CD8-positive, alpha-beta T cell (primary cell): ENCODE measurements at regions of chr6 and their contacts with region 1.

Region 1: DNA sequence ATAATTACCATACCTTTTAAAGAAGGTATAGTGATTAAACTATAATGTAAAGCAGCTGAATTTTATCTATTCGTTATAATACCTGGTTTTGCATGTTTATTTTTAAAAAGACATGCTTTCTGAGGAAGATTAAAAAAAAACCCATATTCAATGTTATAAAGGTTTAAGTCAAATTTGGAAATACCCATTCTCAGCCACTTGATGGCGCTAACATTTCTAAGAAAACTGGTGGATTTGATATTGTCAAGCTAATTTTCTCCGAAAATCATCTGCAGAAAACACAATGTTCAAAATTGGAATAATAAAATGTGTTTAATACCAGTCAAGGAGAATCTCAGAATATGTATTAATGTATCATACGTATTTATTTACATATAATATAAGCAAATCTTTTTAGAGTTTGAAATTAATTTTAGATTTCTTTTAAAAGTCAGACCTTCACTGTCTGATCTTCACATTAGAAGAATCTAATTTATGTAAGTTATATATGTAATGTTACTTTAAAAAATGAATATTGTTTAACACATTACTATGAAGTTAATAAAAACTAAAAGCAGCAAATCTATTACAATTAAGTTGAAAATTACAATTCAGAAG is 35.0 kb downstream of the SHPRH start:
- DNase-seq: peak in 3 of 9 experiments; percentile 5 to 56 (median 37)
- ATAC-seq: no peak
- H3K4me3 ChIP-seq: no peak overlapping the region
- H3K4me3 Mint-ChIP-seq: no peak overlapping the region
- H3K27ac ChIP-seq: no peak overlapping the region
- H3K27ac Mint-ChIP-seq: no peak overlapping the region
- H3K4me1 ChIP-seq: no peaks in the 10 kb centered on the region
- H3K4me1 Mint-ChIP-seq: no peaks in the 10 kb centered on the region
- H3K27me3 ChIP-seq: no peaks in the 10 kb centered on the region
- H3K27me3 Mint-ChIP-seq: no peaks in the 10 kb centered on the region
- CTCF ChIP-seq: peak; percentile 91

Region 2: DNA sequence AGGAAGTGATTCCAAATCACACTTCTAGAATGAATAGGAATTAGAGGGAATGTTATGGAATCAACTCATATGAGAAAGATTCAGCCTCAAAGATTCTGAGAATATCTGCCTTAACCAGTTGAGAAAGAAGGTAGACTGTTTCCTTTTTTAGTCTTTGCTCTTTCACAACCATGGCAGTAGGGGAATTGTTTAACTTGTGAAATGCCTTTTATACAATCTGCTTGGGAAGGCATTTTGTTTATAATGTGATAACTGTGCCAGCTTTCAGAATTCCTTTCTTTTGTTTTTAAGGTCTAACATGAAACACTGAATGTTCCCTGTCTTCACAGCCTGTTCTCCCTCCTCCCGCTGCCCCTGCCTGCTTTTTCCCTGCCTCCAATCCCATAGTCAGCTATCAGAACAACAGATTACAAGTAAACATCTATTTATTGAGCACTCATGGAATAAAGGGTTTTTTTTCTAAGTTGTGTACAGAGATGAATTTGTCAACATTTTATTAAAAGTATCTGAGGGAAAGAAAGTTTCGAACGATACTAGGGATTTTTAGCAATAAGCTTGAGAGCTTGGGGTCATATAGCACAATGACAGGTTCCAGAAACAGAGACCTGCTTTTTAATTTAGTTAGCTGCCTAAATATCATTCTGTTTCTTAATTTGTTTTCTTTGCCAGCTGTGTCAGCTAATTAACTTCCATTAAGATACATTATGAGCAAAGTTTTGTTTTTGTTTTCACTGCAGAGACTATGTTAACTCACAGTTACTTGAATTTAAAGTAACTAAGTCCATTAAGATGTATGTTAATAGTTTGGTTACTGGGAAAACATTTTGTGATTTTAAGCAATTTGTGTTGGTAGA is 86.2 kb before region 1 on chr6:
- CTCF ChIA-PET with region 1: no interaction called
- POLR2A ChIA-PET with region 1: no interaction called
- intact Hi-C with region 1: no loop called
- DNase-seq: no peak
- ATAC-seq: no peak
- H3K4me3 ChIP-seq: no peak overlapping the region
- H3K4me3 Mint-ChIP-seq: no peak overlapping the region
- H3K27ac ChIP-seq: no peak overlapping the region
- H3K27ac Mint-ChIP-seq: no peak overlapping the region
- H3K4me1 ChIP-seq: no peaks in the 10 kb centered on the region
- H3K4me1 Mint-ChIP-seq: no peaks in the 10 kb centered on the region
- H3K27me3 ChIP-seq: no peaks in the 10 kb centered on the region
- H3K27me3 Mint-ChIP-seq: no peaks in the 10 kb centered on the region
- CTCF ChIP-seq: no peak

Region 3: GRCh38 chr6:146700078-146700686 is 771.0 kb after region 1 on chr6:
- CTCF ChIA-PET with region 1: interaction called, 7 read pairs
- POLR2A ChIA-PET with region 1: no interaction called
- intact Hi-C with region 1: loop called (anchors 2 kb)
- DNase-seq: peak in 6 of 9 experiments; percentile 7 to 58 (median 28)
- ATAC-seq: no peak
- H3K4me3 ChIP-seq: no peak overlapping the region
- H3K4me3 Mint-ChIP-seq: no peak overlapping the region
- H3K27ac ChIP-seq: no peak overlapping the region
- H3K27ac Mint-ChIP-seq: no peak overlapping the region
- H3K4me1 ChIP-seq: no peaks in the 10 kb centered on the region
- H3K4me1 Mint-ChIP-seq: no peaks in the 10 kb centered on the region
- H3K27me3 ChIP-seq: no peaks in the 10 kb centered on the region
- H3K27me3 Mint-ChIP-seq: no peaks in the 10 kb centered on the region
- CTCF ChIP-seq: peak; percentile 64

Region 4: GRCh38 chr6:146775226-146775625 is 846.1 kb after region 1 on chr6:
- CTCF ChIA-PET with region 1: no interaction called
- POLR2A ChIA-PET with region 1: no interaction called
- intact Hi-C with region 1: loop called in 1 of 2 experiments (anchors 2 kb)
- DNase-seq: peak in 2 of 9 experiments; percentile 3 to 10
- ATAC-seq: no peak
- H3K4me3 ChIP-seq: no peak overlapping the region
- H3K4me3 Mint-ChIP-seq: no peak overlapping the region
- H3K27ac ChIP-seq: no peak overlapping the region
- H3K27ac Mint-ChIP-seq: no peak overlapping the region
- H3K4me1 ChIP-seq: peaks cover 10% of the 10 kb centered on the region
- H3K4me1 Mint-ChIP-seq: peaks cover 16% of the 10 kb centered on the region
- H3K27me3 ChIP-seq: no peaks in the 10 kb centered on the region
- H3K27me3 Mint-ChIP-seq: no peaks in the 10 kb centered on the region
- CTCF ChIP-seq: no peak